ENCODE measurements at regions of chr15 and their contacts with region 1.

Region 1: GRCh38 chr15:82749951-82750830 is 40.5 kb upstream of the AP3B2 start:
- DNase-seq: peak; percentile 93
- H3K4me3 ChIP-seq: peak overlapping the region; percentile 63 to 88 (median 70)
- H3K27ac ChIP-seq: peak overlapping the region; percentile 86 to 89 (median 88)
- H3K4me1 ChIP-seq: peaks cover 7 to 21% (median 19%) of the 10 kb centered on the region in 4 donors
- H3K27me3 ChIP-seq: no peaks in the 10 kb centered on the region
- CTCF ChIP-seq: no peak
- EP300 ChIP-seq: no peak
- POLR2A ChIP-seq: peak; percentile 76

Region 2: GRCh38 chr15:82768428-82769081 is 18.4 kb after region 1 on chr15:
- in situ Hi-C with region 1: no loop called
- intact Hi-C with region 1: no loop called
- DNase-seq: no peak
- H3K4me3 ChIP-seq: no peak overlapping the region
- H3K27ac ChIP-seq: no peak overlapping the region
- H3K4me1 ChIP-seq: no peaks in the 10 kb centered on the region
- H3K27me3 ChIP-seq: no peaks in the 10 kb centered on the region
- CTCF ChIP-seq: no peak
- EP300 ChIP-seq: no peak
- POLR2A ChIP-seq: no peak

Region 3: DNA sequence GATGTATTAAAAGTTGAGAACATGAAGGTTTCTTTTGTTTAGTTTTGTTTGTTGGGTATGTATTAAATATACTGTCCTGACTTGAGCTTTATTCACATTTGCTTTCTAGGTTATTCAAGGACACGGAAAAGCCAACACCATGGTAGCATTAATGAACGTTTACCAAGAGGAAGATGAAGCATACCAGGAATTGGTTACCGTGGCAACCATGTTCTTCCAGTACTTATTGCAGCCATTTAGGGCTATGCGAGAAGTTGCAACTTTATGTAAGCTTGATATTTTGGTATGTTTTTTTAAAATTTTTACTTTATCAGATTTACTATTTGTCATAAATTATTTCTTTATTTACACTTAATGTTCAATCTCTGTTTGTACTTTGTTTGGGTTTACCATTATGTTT is 62.8 kb after region 1 on chr15:
- in situ Hi-C with region 1: no loop called
- intact Hi-C with region 1: loop called (anchors 2 kb)
- DNase-seq: no peak
- H3K4me3 ChIP-seq: no peak overlapping the region
- H3K27ac ChIP-seq: no peak overlapping the region
- H3K4me1 ChIP-seq: peaks cover 7 to 27% (median 17%) of the 10 kb centered on the region in 4 donors
- H3K27me3 ChIP-seq: no peaks in the 10 kb centered on the region
- CTCF ChIP-seq: no peak
- EP300 ChIP-seq: no peak
- POLR2A ChIP-seq: no peak

Measured in transverse colon (tissue), 4 donors.